ENCODE measurements at regions of chr3 and their contacts with region 1.

Region 1: DNA sequence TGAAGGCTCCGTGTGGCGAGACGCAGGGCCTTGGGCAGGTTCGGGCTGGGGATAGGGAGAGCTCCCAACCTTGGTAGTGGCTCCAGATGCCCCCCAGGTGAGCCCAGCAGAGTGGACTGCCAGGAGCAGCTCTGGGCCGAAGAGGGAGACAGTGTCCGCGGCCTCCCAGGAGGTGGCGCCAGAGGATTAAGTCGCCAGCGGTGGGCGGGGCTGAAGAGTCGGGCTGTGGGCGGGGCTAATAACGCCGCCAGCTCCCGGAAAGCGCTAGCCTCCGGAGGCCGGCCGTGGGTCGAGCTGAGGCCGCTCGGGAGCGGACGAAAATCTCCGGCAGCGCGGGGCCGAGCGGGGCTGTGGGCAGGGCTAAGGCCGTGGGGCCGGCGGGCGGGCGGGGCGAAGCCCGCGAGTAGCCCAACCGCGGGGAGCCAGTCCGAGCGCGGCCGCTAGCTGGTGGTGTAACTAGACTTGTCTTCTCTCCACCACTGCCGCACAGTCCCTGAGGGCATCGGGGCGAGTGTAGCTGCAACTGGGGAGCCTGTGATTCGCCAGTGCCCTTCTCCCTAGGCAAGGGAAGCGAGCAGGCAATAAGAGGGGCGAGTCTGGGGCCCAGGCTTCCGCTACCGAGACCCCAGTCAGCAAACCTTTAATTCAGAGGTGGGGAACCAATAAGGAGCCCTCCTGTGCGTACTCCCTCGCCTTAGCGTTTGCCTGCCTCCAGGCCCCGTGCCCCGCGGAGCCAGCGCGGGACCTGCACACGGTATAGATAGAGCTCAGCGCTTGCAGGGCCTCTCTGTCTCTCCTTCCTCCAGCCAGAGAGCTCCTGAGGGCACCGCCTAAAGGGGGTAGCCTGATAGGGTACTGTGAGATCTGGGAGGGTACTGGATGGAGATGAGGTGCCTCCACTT is 14.4 kb upstream of the BSN start:
- DNase-seq: peak; percentile 91
- ATAC-seq: peak; percentile 99
- H3K4me3 ChIP-seq: peak overlapping the region; percentile 44
- H3K27ac ChIP-seq: peak overlapping the region; percentile 20; the same call in 1 of the 2 replicates
- H3K4me1 ChIP-seq: peaks cover 12% of the 10 kb centered on the region
- H3K27me3 ChIP-seq: peaks cover 7% of the 10 kb centered on the region
- CTCF ChIP-seq: peak; percentile 91
- POLR2A ChIP-seq: peak; percentile 46; the same call in 1 of the 2 replicates
- RAD21 ChIP-seq: peak; percentile 91

Region 2: DNA sequence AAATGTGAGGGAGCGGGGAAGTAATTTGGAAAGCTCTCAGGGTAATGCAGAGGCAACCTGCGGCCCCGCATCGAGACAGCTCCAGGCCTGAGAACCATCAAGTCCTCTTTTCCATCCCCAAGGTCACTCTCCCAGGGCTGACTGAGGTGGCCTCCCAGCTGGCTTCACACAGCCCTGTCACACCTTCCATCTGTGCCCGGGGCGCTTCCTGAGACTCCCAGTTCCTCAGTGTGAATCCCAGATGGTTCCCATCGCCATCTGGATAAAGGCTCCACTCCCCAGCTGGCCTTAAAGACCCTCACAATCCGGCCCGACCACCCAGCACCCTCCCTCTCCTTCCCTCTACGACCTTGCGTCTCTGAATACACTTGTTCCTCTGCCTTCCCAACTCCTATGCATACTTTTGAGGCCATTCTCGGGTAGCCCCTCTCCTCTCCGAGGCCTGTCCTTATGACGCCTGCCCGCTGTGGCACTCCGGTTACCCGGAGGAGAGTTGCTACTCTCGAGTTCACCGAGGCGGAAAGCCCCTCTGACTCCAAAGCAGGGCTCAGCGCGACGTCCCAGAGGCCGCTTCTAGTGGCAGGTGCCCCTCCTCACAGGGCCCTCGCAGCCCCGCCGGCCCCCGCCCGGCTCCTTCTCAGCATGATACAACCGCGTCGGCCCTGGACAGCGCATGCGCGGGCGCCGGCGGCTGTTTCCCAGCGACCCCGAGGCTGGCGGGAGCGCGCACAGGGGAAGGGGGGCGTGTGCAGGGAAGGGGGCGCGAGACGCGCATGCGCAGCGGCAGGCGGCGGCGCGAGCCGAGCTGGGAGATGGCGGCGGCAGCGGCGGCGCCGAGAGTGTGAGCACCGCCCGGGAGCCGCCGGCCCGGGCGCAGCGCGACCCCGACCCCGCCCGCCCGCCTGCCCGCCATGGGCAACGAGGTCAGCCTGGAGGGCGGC is 14.1 kb after region 1 on chr3 and contains the start of gene BSN:
- CTCF ChIA-PET with region 1: interaction called, 15 read pairs
- POLR2A ChIA-PET with region 1: no interaction called
- dilution Hi-C with region 1: no loop called
- in situ Hi-C with region 1: no loop called
- intact Hi-C with region 1: no loop called
- DNase-seq: peak; percentile 82
- ATAC-seq: peak; percentile 95
- H3K4me3 ChIP-seq: peak within 1 kb of the TSS; percentile 58
- H3K27ac ChIP-seq: peak within 1 kb of the TSS; percentile 10; the same call in 1 of the 2 replicates
- H3K4me1 ChIP-seq: peaks cover 2% of the 10 kb centered on the region; the same call in 1 of the 2 replicates
- H3K27me3 ChIP-seq: peaks cover 30% of the 10 kb centered on the region
- CTCF ChIP-seq: no peak
- POLR2A ChIP-seq: no peak
- RAD21 ChIP-seq: no peak
- total RNA-seq, gene BSN: under 0.01 TPM in 2 replicates

Region 3: DNA sequence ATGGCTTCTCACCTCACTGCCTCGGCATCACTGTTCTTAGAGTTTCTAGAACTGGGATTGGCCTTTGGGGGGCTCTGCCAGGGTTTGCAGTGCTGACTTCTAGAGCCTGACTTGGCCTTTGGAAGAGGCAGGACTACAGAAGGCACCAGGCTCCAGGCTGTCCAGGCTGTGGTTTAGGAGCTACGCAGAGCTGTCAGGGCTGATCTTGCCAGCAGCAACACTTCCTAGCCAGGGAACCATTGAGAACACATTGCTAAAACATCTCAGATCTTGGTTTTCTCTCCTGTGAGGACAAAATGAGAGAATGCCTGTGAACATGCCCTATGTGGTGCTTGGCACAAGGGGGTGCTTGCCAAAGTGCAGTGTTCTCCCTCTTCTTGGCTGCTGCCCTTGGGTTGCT is 99.6 kb after region 1 on chr3:
- CTCF ChIA-PET with region 1: no interaction called
- POLR2A ChIA-PET with region 1: no interaction called
- dilution Hi-C with region 1: no loop called
- in situ Hi-C with region 1: no loop called
- intact Hi-C with region 1: no loop called
- DNase-seq: no peak
- ATAC-seq: no peak
- H3K4me3 ChIP-seq: no peak overlapping the region
- H3K27ac ChIP-seq: no peak overlapping the region
- H3K4me1 ChIP-seq: peaks cover 3% of the 10 kb centered on the region; the same call in 1 of the 2 replicates
- H3K27me3 ChIP-seq: peaks cover 35% of the 10 kb centered on the region
- CTCF ChIP-seq: no peak
- POLR2A ChIP-seq: no peak
- RAD21 ChIP-seq: no peak

Region 4: GRCh38 chr3:49666592-49666991 is 126.7 kb after region 1 on chr3:
- CTCF ChIA-PET with region 1: interaction called, 23 read pairs
- POLR2A ChIA-PET with region 1: no interaction called
- dilution Hi-C with region 1: no loop called
- in situ Hi-C with region 1: no loop called
- intact Hi-C with region 1: loop called (anchors 1 kb)
- DNase-seq: no peak
- ATAC-seq: no peak
- H3K4me3 ChIP-seq: no peak overlapping the region
- H3K27ac ChIP-seq: no peak overlapping the region
- H3K4me1 ChIP-seq: peaks cover 2% of the 10 kb centered on the region; the same call in 1 of the 2 replicates
- H3K27me3 ChIP-seq: peaks cover 11% of the 10 kb centered on the region; the same call in 1 of the 2 replicates
- CTCF ChIP-seq: no peak
- POLR2A ChIP-seq: no peak
- RAD21 ChIP-seq: no peak

Region 5: GRCh38 chr3:49673715-49674496 is 134.0 kb after region 1 on chr3 and contains the start of gene APEH:
- CTCF ChIA-PET with region 1: interaction called, 23 read pairs
- POLR2A ChIA-PET with region 1: no interaction called
- dilution Hi-C with region 1: no loop called
- in situ Hi-C with region 1: loop called (anchors 5 kb)
- intact Hi-C with region 1: loop called (anchors 1 kb)
- DNase-seq: peak; percentile 96
- ATAC-seq: peak; percentile 93
- H3K4me3 ChIP-seq: peak within 1 kb of the TSS; percentile 86
- H3K27ac ChIP-seq: peak within 1 kb of the TSS; percentile 90
- H3K4me1 ChIP-seq: peaks cover 9% of the 10 kb centered on the region
- H3K27me3 ChIP-seq: no peaks in the 10 kb centered on the region
- CTCF ChIP-seq: no peak
- POLR2A ChIP-seq: peak; percentile 82
- RAD21 ChIP-seq: no peak
- total RNA-seq, gene APEH: 116 and 142 TPM in 2 replicates

Region 6: GRCh38 chr3:50486219-50486888 is 946.4 kb after region 1 on chr3:
- CTCF ChIA-PET with region 1: no interaction called
- POLR2A ChIA-PET with region 1: no interaction called
- dilution Hi-C with region 1: no loop called
- in situ Hi-C with region 1: no loop called
- intact Hi-C with region 1: no loop called
- DNase-seq: peak; percentile 17
- ATAC-seq: no peak
- H3K4me3 ChIP-seq: no peak overlapping the region
- H3K27ac ChIP-seq: no peak overlapping the region
- H3K4me1 ChIP-seq: no peaks in the 10 kb centered on the region
- H3K27me3 ChIP-seq: peaks cover 24% of the 10 kb centered on the region
- CTCF ChIP-seq: no peak
- POLR2A ChIP-seq: no peak
- RAD21 ChIP-seq: no peak

Measured in IMR-90 (cell line).